Activated CD4-positive, alpha-beta T cell treated with anti-CD3 and anti-CD28 coated beads, Interleukin-2, amount 10 ng/mL, durations not matched to agents 7 days and 5 days (primary cell): ENCODE measurements at regions of chr2 and their contacts with region 1.

Region 1: GRCh38 chr2:100381240-100381639 is 36.2 kb downstream of the CHST10 start:
- DNase-seq: peak; percentile 81
- H3K4me3 Mint-ChIP-seq: no peak overlapping the region
- H3K27ac Mint-ChIP-seq: no peak overlapping the region
- H3K4me1 Mint-ChIP-seq: no peaks in the 10 kb centered on the region
- H3K27me3 Mint-ChIP-seq: no peaks in the 10 kb centered on the region

Region 2: DNA sequence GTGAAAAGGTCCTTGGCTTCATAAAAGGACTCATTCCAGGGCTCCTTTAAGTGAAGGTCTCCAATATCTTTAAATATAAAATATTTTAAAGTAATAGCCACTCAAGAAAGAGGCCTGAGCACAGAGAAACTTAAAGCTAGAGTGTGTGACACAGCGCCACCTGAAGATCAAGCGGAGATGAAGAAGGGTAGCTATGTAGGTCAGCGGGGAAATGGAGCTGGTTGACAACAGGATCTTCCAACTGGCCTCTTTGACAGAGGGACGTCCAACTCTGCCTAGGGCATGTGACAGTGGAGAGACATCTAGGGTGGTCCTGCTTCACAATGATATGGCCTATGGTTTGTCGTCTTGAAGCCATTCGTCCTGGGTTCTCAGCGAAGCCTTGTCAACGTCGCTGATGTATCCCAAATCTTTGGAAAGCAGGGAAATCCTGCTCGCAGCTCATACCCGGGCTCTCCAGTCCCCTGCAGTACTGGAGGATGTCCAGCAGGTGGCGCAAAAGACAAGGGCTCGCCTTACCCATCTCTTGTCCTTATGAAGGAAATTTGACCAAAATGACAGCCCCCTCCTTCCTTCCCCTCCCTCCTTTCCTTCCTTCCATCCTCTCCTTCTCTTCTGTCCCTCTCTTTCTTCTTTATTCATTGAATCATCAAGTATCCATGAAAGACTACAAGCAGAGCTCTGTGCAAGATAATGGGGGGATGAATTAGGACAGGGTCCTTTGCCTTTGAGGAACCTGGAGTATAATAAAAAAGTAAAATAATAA is 118.5 kb before region 1 on chr2:
- CTCF ChIA-PET with region 1: interaction called, 27 read pairs
- POLR2A ChIA-PET with region 1: interaction called, 4 read pairs
- DNase-seq: peak; percentile 69
- H3K4me3 Mint-ChIP-seq: no peak overlapping the region
- H3K27ac Mint-ChIP-seq: no peak overlapping the region
- H3K4me1 Mint-ChIP-seq: no peaks in the 10 kb centered on the region
- H3K27me3 Mint-ChIP-seq: no peaks in the 10 kb centered on the region

Region 3: GRCh38 chr2:100404431-100404830 is 23.2 kb after region 1 on chr2:
- CTCF ChIA-PET with region 1: no interaction called
- POLR2A ChIA-PET with region 1: no interaction called
- DNase-seq: no peak
- H3K4me3 Mint-ChIP-seq: no peak overlapping the region
- H3K27ac Mint-ChIP-seq: no peak overlapping the region
- H3K4me1 Mint-ChIP-seq: no peaks in the 10 kb centered on the region
- H3K27me3 Mint-ChIP-seq: no peaks in the 10 kb centered on the region